Ascending aorta (tissue), 2 donors: ENCODE measurements at regions of chr21 and their contacts with region 1.

Region 1: GRCh38 chr21:32826329-32827167 is 55.0 kb upstream of the PAXBP1 start:
- DNase-seq: no peak
- H3K4me3 ChIP-seq: no peak overlapping the region
- H3K27ac ChIP-seq: no peak overlapping the region
- H3K4me1 ChIP-seq: no peaks in the 10 kb centered on the region
- H3K27me3 ChIP-seq: no peaks in the 10 kb centered on the region
- CTCF ChIP-seq: peak in 2 of 3 experiments; percentile 36 to 41

Region 2: DNA sequence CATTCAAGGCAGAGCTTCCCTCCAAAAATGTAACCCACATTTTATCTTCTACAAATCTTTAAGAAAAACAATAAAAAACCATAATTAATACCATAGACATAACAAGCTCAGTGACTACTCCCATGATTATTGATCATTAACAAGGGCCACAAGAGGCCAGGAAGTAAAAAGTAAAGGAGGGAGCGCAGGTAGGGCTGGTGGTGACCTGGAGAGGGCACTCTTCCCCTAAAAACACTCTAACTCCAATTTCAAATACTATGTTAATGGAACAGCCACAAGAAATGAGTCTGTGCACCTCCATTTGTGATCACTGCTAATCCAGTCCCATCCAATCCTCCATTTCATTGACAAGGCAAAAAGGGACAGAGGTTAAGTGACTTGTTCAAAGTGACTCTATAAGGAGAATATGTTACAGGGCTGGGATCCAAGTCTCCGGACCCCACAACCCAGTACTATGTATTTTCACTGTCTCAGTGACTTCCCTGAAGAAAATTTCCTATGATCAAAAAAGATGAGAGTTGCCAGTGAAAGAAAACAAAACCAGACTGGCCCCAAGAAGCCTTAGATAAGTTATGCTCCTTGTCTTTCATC is 173.1 kb before region 1 on chr21:
- intact Hi-C with region 1: loop called (anchors 5 kb)
- DNase-seq: no peak
- H3K4me3 ChIP-seq: no peak overlapping the region
- H3K27ac ChIP-seq: no peak overlapping the region
- H3K4me1 ChIP-seq: no peaks in the 10 kb centered on the region
- H3K27me3 ChIP-seq: no peaks in the 10 kb centered on the region
- CTCF ChIP-seq: peak in 1 of 3 experiments; percentile 51